ENCODE measurements at regions of chr2 and their contacts with region 1.

Region 1: DNA sequence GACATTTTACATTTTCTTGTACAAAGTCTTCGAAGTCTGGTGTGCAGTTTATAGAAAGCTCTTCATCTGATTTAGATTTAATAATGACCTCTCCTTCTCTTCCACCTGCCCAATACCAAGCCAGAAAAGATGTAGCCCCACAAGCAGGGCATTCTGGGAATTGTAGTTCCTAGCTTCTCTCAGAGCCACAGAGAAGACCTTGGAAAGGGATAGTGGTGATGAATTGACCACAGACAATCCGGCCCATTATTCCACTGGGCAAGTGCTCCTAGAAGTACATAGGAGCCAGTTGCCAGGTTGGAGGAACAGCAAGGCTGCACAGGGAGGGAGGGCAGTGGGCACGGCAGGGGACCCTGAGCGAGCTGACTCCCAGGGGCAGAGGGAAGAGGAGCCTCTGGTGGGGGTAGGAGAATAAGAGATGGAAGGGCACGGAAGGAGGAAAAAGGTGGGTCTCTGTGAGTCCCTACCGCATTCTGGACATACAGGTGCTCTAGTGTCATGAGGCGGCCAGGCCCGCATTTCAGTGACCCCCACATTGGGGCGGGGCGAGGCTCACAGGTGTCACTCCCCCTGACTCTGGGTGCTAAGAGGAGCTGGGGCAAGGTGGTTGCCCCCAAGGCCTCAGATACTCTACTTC is 152.5 kb upstream of the HAAO start:
- DNase-seq: no peak
- ATAC-seq: no peak
- H3K4me3 ChIP-seq: no peak overlapping the region
- H3K27ac ChIP-seq: no peak overlapping the region
- H3K4me1 ChIP-seq: peaks cover 0 to 6% (median 3%) of the 10 kb centered on the region in 3 donors
- H3K27me3 ChIP-seq: no peaks in the 10 kb centered on the region
- CTCF ChIP-seq: no peak

Region 2: GRCh38 chr2:43484323-43484930 is 539.5 kb after region 1 on chr2:
- intact Hi-C with region 1: loop called in 1 of 3 experiments (anchors 10 kb)
- DNase-seq: no peak
- ATAC-seq: peak in 3 of 4 donors; percentile 78 to 83 (median 81)
- H3K4me3 ChIP-seq: no peak overlapping the region
- H3K27ac ChIP-seq: no peak overlapping the region
- H3K4me1 ChIP-seq: peaks cover 0 to 18% (median 12%) of the 10 kb centered on the region in 3 donors
- H3K27me3 ChIP-seq: no peaks in the 10 kb centered on the region
- CTCF ChIP-seq: peak in 3 of 4 donors; percentile 28 to 58 (median 47)